BJ (cell line): ENCODE measurements at regions of chr9 and their contacts with region 1.

Region 1: DNA sequence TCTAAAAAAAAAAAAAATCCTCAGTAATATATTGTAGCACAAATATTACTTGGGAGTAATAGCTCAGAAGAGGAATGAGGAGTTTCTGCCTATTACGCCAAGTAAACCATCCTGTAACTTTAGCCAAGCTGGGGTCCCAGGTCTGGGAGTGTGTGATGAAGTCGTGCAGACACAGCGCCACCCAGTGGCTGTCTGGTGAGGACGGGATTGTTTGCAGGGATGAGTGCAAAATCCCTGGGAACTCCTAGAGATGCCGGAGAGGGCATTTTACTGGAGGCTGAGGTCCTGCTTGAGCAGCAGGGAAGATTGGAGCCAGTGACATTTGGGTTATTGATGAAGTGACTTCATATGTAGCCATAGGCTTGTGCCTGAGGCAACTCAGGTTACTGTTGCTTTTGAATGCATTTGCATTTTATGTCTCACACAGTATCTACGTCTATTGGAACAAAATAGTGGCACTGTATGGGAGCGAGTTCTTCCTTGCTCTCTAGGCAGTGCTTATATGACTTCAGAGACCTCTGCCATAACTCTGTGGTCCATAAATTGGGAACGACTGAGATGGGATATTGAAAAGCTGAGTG is 72.8 kb downstream of the PSAT1 start:
- DNase-seq: no peak
- H3K4me3 ChIP-seq: no peak overlapping the region
- H3K27me3 ChIP-seq: no peaks in the 10 kb centered on the region
- CTCF ChIP-seq: peak; percentile 87

Region 2: GRCh38 chr9:77514886-77515711 is 854.6 kb before region 1 on chr9:
- CTCF ChIA-PET with region 1: no interaction called
- POLR2A ChIA-PET with region 1: no interaction called
- DNase-seq: peak; percentile 79
- H3K4me3 ChIP-seq: no peak overlapping the region
- H3K27me3 ChIP-seq: no peaks in the 10 kb centered on the region; the same call in 1 of the 2 replicates
- CTCF ChIP-seq: no peak

Region 3: GRCh38 chr9:78261403-78262001 is 108.2 kb before region 1 on chr9:
- CTCF ChIA-PET with region 1: interaction called, 10 read pairs
- POLR2A ChIA-PET with region 1: no interaction called
- DNase-seq: no peak
- H3K4me3 ChIP-seq: no peak overlapping the region
- H3K27me3 ChIP-seq: no peaks in the 10 kb centered on the region
- CTCF ChIP-seq: peak; percentile 45

Region 4: GRCh38 chr9:78273761-78274160 is 96.0 kb before region 1 on chr9:
- CTCF ChIA-PET with region 1: interaction called, 15 read pairs
- POLR2A ChIA-PET with region 1: no interaction called
- DNase-seq: no peak
- H3K4me3 ChIP-seq: no peak overlapping the region
- H3K27me3 ChIP-seq: no peaks in the 10 kb centered on the region
- CTCF ChIP-seq: no peak

Region 5: DNA sequence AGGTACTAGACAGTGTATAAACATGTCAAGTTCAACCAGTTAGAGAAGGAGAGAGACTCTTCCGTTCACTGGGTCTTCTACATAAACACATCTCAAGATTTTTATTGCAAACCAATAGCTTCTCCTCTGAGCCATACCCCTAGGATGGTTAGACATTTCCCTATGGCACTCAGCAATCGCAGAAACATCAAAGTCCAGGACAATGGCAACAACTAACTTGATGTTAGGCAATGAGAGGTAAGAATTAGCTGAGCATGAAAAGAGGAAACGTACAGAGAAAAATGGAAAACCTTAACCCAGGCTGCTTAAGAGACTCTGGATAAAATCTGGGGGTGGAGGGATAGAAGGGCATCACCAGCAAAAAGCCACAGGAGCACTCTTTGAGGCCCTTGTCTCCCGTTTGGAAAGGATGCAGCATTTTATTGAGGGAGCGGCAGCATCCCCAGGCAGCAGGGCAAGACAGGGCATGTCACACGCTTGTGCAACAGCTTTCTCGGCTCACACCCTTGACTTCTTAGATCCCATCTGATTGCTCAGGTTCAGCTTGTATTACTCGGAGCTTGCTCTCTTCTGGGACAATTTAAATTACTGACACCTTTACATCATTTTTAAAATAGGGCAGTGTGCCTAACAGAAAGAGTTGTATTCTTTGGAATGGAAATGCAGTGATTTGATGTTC is 81.4 kb before region 1 on chr9:
- CTCF ChIA-PET with region 1: no interaction called
- POLR2A ChIA-PET with region 1: no interaction called
- DNase-seq: no peak
- H3K4me3 ChIP-seq: no peak overlapping the region
- H3K27me3 ChIP-seq: peaks cover 4% of the 10 kb centered on the region; the same call in 1 of the 2 replicates
- CTCF ChIP-seq: no peak

Region 6: DNA sequence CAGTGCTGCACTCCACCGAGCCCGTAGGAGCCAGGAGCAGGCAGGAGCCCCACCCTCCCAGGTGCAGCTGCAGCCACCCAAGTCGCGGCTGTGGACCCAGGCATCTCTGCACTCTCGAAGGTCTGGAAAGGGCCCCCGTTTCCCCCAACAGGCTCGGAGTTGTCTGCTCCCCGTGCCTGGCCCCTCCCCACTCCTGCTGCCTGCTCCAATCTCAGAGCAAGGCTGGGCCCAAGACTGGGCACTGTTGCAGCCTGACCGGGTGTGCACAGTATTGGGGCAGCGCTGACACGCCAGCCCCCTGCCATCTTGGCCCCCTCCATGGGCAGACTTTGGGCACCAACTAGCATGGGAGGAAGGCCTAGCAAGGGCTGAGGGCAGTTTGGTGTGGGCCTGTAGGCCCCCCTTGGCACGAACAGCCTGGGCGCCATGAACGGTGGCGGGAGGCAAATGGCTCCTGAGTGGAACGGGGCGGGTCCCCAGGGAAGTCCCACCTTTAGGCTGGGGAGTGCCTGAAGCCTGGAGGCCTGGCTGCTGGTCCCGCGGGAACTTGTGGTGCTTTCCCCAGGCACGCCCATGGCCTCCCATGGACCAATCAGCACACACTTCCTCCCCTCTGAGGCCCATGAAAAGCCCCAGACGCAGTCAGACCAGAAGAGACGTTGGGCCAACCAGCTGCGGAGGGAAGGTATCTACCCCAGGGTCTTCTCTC is 12.4 kb before region 1 on chr9:
- CTCF ChIA-PET with region 1: interaction called, 14 read pairs
- POLR2A ChIA-PET with region 1: no interaction called
- DNase-seq: no peak
- H3K4me3 ChIP-seq: no peak overlapping the region
- H3K27me3 ChIP-seq: no peaks in the 10 kb centered on the region
- CTCF ChIP-seq: no peak

Region 7: DNA sequence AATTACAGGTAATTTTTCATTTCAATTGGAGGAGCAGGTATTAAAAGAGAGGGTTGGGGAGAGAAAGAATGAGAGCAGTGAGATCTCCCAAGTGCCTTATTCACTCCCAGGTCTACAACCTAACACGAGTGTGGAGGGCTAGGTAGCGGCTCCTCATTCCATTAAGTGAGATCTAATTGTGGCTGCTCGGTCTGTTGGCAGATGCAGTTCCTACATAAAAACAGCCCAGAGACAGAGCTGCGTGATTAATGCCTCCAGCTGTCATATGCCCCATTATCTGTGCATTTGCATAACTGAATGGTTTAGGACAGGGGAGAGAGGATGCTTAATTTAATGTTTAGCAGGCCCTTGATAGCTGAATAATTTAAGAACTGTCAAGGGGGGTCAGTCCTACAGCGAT is 27.7 kb after region 1 on chr9:
- CTCF ChIA-PET with region 1: interaction called, 11 read pairs
- POLR2A ChIA-PET with region 1: no interaction called
- DNase-seq: no peak
- H3K4me3 ChIP-seq: no peak overlapping the region
- H3K27me3 ChIP-seq: peaks cover 3% of the 10 kb centered on the region; the same call in 1 of the 2 replicates
- CTCF ChIP-seq: no peak